Activated CD8-positive, alpha-beta T cell treated with anti-CD3 and anti-CD28 coated beads for 36 hours (primary cell): ENCODE measurements at regions of chr11 and their contacts with region 1.

Region 1: DNA sequence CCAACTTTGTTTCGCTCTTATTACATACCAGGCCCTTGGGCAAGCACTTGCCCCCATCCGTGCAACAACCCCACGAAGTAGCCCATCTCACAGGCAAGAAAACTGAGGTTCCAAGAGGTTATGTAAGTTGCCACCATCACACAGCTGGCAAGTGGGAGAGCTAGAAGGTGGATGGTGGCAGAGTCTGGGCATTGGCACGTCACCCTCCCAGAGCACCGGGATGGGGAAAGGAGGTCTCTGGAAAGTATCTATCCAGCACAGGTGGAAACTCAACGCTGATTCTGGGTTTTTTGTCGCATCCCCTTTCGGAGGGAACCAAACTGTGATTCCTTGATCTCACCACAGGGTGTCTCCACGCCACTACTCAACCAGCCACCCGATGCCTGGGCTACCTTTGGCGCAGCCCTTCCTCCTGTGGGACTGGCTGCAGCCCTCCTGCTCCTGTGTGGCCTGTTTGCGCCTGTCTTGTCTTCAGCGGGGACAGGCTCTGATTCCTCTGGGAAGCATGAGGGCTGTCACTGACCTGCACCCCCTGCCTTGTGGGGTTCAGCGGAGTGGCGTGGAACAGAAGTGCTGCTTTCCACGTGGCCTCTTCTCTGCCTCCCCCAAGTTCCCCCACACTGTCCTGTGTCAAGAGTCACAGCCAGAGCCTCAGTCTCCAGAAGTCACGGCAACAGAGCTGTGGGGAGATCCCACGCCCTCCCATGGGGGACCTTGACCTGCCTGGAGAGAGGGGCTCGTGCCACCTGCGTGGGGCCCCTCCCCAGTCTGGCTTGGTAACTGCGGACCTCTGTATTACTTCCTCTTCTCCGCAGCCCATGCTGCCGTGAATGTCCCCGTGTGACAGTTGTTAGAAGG is 34.4 kb upstream of the TRIM29 start:
- DNase-seq: peak; percentile 66
- ATAC-seq: peak; percentile 79
- H3K4me3 Mint-ChIP-seq: no peak overlapping the region
- H3K27ac Mint-ChIP-seq: no peak overlapping the region
- H3K4me1 Mint-ChIP-seq: peaks cover 3% of the 10 kb centered on the region
- H3K27me3 Mint-ChIP-seq: peaks cover 43% of the 10 kb centered on the region
- CTCF ChIP-seq: peak; percentile 55

Region 2: GRCh38 chr11:119615003-119615881 is 557.0 kb before region 1 on chr11:
- CTCF ChIA-PET with region 1: no interaction called
- POLR2A ChIA-PET with region 1: no interaction called
- intact Hi-C with region 1: no loop called
- DNase-seq: no peak
- ATAC-seq: no peak
- H3K4me3 Mint-ChIP-seq: no peak overlapping the region
- H3K27ac Mint-ChIP-seq: no peak overlapping the region
- H3K4me1 Mint-ChIP-seq: no peaks in the 10 kb centered on the region
- H3K27me3 Mint-ChIP-seq: peaks cover 4% of the 10 kb centered on the region
- CTCF ChIP-seq: no peak

Region 3: GRCh38 chr11:120151536-120151935 is 20.7 kb before region 1 on chr11:
- CTCF ChIA-PET with region 1: interaction called, 12 read pairs
- POLR2A ChIA-PET with region 1: no interaction called
- intact Hi-C with region 1: no loop called
- DNase-seq: no peak
- ATAC-seq: no peak
- H3K4me3 Mint-ChIP-seq: no peak overlapping the region
- H3K27ac Mint-ChIP-seq: no peak overlapping the region
- H3K4me1 Mint-ChIP-seq: no peaks in the 10 kb centered on the region
- H3K27me3 Mint-ChIP-seq: peaks cover 23% of the 10 kb centered on the region
- CTCF ChIP-seq: no peak

Region 4: DNA sequence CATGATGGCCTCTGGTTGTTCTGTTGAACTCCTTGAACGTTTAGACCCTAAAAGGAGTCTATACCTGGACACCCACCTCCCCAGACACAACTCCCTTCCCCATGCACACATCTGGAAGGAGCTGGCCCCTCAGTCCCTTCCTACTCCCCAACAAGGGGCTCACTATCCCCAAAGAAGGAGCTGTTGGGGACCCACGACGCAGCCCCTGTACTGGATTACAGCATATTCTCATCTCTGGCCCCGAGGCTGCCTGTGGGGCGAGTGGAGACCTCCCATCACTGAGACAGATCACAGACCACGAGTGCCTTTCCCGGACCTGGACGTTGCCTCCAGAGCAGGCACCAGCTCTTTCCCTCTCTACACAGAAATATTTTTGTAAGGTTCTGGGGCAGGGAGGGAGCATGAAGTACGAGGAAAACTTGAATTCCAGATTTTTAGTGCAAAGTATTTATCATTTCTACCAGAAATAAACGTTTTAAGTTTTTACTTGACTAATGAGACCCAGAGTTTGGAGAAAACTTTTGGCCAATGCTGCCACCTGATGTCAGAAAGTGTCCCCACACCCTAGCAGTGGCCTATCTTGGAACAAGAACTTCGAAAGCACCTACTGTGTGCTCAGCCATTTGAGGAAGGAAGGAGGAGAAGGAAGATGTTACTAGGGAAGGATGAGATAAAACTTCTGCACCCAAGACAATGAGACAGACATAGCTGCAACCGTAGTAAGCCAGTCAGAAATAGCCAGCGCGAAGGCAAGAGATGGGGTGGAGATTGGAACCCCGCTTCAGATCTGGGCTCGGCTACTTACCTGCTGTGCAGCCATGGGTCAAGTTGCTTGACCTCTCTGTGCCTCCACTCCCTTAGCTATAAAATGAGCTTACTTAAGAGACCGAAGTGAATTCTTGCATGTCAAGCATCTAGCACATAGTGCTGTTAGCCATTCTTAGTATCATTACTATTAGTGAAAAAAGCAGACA is 57.5 kb after region 1 on chr11:
- CTCF ChIA-PET with region 1: interaction called, 88 read pairs
- POLR2A ChIA-PET with region 1: no interaction called
- intact Hi-C with region 1: loop called (anchors 2 kb)
- DNase-seq: peak; percentile 50
- ATAC-seq: peak; percentile 45
- H3K4me3 Mint-ChIP-seq: no peak overlapping the region
- H3K27ac Mint-ChIP-seq: no peak overlapping the region
- H3K4me1 Mint-ChIP-seq: peaks cover 4% of the 10 kb centered on the region
- H3K27me3 Mint-ChIP-seq: peaks cover 5% of the 10 kb centered on the region
- CTCF ChIP-seq: peak; percentile 72

Region 5: DNA sequence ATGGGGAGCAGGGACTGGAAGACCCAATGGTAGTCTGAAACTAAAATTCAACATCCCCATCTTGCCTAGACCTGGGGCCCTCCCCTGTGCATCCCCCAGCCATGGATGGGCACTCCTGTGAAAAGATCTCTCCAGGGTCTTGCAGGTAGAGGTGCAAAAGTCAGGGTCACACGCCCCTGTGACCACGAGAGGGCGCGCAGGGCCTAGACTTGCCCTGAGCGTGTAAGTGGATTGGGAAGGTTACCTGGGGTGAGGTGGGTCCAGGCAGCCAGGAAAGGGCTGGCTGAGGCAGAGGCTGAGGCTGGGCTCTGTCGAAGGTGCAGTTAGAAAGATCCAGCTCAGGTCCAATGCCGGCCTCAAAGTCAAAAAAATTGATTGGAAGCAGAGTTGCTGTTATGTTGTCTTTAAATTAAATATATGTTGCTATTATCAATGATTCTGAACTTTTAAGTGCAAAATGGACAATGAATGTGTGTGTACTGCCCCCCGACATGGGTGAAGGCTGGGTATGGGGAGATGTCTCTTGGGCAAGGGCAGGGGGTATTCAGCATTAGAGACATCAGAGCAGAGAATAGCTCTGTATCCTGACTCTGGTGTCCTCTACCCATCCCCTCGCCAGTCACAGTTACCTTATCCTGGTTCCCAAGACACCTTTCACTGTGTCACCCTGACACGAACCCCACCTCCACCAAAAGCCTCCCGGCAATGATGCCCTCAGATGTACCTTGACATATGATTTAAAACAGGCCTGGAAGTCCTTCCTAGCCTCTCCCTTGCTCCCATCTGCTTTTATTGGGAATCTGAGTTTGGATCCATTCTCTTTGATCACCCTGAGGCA is 63.0 kb after region 1 on chr11:
- CTCF ChIA-PET with region 1: interaction called, 88 read pairs
- POLR2A ChIA-PET with region 1: no interaction called
- intact Hi-C with region 1: loop called (anchors 2 kb)
- DNase-seq: peak; percentile 85
- ATAC-seq: peak; percentile 86
- H3K4me3 Mint-ChIP-seq: no peak overlapping the region
- H3K27ac Mint-ChIP-seq: no peak overlapping the region
- H3K4me1 Mint-ChIP-seq: no peaks in the 10 kb centered on the region
- H3K27me3 Mint-ChIP-seq: peaks cover 30% of the 10 kb centered on the region
- CTCF ChIP-seq: peak; percentile 83